ENCODE measurements at regions of chr7 and their contacts with region 1.

Region 1: DNA sequence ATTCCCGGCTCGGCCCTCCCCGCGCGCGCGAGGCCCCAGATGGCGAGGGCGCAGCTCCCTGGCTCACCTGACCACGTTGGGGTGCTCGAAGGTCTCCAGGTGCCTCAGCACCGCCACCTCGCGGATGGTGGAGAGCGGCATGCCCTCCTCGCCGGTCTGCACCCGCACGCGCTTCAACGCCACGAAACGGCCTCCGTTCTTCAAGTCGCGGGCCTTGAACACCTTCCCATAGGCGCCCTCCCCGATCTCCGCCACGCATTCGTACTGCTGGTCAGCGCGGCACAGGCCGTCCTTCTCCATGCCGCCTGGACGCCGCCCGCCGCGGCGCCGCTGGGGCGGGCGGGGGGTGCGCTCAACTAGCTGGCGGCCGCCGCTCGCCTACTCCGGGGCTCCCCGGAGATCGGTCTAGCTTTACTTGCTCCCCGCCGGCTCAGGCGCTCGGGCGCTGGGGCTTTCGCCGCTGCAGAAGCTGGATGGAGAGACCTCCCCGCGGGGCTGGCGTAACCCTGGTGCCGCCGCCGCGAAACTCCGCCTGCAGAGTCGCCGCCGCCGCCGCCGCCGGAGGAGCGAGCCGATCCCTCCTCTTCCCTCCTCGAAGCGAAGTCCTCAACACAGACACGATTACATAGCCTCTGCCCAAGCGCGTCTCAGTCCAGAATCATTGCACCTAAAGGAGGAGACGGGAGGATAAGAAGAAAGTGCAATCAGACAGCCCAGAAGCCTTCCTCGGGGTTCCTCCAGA is 3.2 kb downstream of the CDK6 start:
- DNase-seq: peak; percentile 97
- H3K4me3 Mint-ChIP-seq: peak overlapping the region; percentile 99
- H3K27ac Mint-ChIP-seq: peak overlapping the region; percentile 100
- H3K4me1 Mint-ChIP-seq: peaks cover 40% of the 10 kb centered on the region
- H3K27me3 Mint-ChIP-seq: peaks cover 6% of the 10 kb centered on the region

Region 2: GRCh38 chr7:92134271-92135051 is 698.7 kb before region 1 on chr7 and contains the start of gene CYP51A1:
- intact Hi-C with region 1: loop called (anchors 5 kb)
- DNase-seq: peak; percentile 99
- H3K4me3 Mint-ChIP-seq: peak within 1 kb of the TSS; percentile 95
- H3K27ac Mint-ChIP-seq: peak within 1 kb of the TSS; percentile 100
- H3K4me1 Mint-ChIP-seq: peaks cover 40% of the 10 kb centered on the region
- H3K27me3 Mint-ChIP-seq: no peaks in the 10 kb centered on the region
- total RNA-seq, gene CYP51A1: 103 and 106 TPM in 2 replicates

Region 3: DNA sequence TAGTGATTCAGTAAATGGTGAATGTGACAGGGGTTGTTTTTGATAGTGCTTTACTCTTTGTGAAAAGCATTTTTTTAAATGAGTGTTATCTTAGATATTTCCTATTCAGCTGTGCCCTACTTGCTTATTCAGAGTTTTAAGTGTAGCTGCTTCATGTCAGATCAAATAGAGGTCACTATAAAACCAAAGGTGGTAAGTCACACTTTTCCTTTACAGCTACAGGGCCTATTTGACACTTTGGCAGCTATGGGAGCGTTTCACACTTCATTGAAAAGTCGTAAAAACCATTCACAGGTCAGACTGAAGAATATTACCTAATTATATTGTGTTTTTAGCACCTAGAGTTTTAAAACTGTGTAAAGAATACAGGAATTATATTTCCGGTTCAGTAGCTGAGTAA is 520.1 kb before region 1 on chr7:
- intact Hi-C with region 1: no loop called
- DNase-seq: no peak
- H3K4me3 Mint-ChIP-seq: no peak overlapping the region
- H3K27ac Mint-ChIP-seq: no peak overlapping the region
- H3K4me1 Mint-ChIP-seq: no peaks in the 10 kb centered on the region
- H3K27me3 Mint-ChIP-seq: no peaks in the 10 kb centered on the region

Region 4: GRCh38 chr7:92621026-92621540 is 212.1 kb before region 1 on chr7:
- intact Hi-C with region 1: loop called (anchors 1 kb)
- DNase-seq: peak; percentile 93
- H3K4me3 Mint-ChIP-seq: peak overlapping the region; percentile 71
- H3K27ac Mint-ChIP-seq: peak overlapping the region; percentile 95
- H3K4me1 Mint-ChIP-seq: peaks cover 46% of the 10 kb centered on the region
- H3K27me3 Mint-ChIP-seq: no peaks in the 10 kb centered on the region

Region 5: DNA sequence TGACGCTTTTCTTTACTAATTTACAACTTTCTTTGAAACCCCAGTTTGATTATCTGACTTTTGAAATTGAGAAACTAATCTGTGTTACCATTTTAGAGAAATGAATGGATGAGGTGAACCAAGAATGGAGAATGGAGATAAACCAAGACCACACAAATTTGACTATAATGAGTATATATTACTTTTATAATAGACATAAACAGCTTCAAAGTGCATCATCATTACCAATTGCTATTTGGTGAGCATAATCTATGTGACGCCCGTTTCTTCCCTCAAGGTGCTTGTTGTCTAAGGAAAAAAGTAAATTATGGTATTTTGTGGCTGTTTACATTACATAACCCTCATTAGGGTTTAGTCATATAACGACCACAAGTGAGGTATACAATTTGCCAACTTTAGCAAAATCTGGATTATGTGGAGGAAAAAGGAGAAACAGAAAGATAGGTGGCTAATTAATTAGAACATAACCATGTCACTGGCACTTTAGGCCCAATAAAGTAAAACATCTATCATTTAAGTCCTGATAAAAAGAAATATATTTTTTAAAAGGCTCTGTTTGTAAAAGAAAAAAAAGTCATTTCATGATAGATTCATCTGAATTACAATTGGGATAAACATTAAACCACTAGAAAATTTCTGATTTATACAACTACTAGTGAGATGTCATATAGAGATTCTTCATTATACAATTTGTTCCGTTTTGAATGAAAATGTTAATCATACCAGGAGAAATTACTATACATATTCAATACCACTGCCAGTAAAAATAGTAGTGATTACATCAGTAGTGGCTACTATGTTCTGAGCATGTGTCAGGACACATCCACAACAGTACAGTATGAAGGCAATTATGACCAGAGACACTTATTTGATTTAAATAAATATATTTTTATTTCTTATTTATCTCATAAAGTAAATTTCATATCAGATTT is 124.8 kb before region 1 on chr7:
- intact Hi-C with region 1: loop called (anchors 2 kb)
- DNase-seq: no peak
- H3K4me3 Mint-ChIP-seq: no peak overlapping the region
- H3K27ac Mint-ChIP-seq: peak overlapping the region; percentile 79
- H3K4me1 Mint-ChIP-seq: peaks cover 34% of the 10 kb centered on the region
- H3K27me3 Mint-ChIP-seq: no peaks in the 10 kb centered on the region

Region 6: GRCh38 chr7:92809397-92810241 is 23.6 kb before region 1 on chr7:
- intact Hi-C with region 1: loop called (anchors 1 kb)
- DNase-seq: peak; percentile 91
- H3K4me3 Mint-ChIP-seq: peak overlapping the region; percentile 73
- H3K27ac Mint-ChIP-seq: peak overlapping the region; percentile 90
- H3K4me1 Mint-ChIP-seq: peaks cover 75% of the 10 kb centered on the region
- H3K27me3 Mint-ChIP-seq: no peaks in the 10 kb centered on the region

Region 7: GRCh38 chr7:92904292-92905131 is 71.3 kb after region 1 on chr7:
- intact Hi-C with region 1: loop called (anchors 1 kb)
- DNase-seq: peak; percentile 93
- H3K4me3 Mint-ChIP-seq: peak overlapping the region; percentile 53
- H3K27ac Mint-ChIP-seq: peak overlapping the region; percentile 94
- H3K4me1 Mint-ChIP-seq: peaks cover 21% of the 10 kb centered on the region
- H3K27me3 Mint-ChIP-seq: no peaks in the 10 kb centered on the region

Region 8: DNA sequence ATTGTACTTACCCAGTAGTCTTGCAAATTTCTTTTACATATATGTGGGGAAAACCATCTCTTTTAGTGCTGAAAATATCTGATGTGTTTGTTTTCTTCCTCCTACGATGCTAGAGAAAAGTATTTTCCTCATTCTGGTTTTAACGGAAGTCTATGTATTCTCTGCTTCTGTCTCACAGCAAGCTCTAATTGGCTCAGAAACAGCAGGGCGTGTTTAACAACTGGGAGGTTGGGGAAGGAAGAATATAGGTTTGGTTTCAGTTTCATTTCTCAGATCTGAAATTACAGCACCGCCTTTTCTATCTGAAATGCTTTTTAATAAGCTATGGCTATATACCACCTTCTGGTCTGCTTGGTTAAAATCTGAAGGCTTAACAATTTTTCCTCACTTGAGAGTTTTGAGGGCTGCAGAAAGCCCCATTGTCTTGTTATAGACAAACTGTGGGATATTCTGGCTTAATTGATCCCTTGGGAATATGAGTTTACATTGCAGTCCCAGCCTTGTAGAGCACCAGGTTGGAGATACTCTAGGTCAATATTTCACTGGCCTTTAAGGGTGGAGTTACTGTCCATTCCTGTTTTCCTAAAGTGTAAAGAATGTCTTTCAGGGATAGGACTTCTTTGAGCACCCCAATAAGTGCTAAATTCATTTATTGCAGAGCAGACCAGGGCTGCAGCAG is 284.8 kb after region 1 on chr7 and contains the start of gene SAMD9:
- intact Hi-C with region 1: loop called (anchors 1 kb)
- DNase-seq: peak; percentile 90
- H3K4me3 Mint-ChIP-seq: peak within 1 kb of the TSS; percentile 90
- H3K27ac Mint-ChIP-seq: peak within 1 kb of the TSS; percentile 90
- H3K4me1 Mint-ChIP-seq: peaks cover 54% of the 10 kb centered on the region
- H3K27me3 Mint-ChIP-seq: no peaks in the 10 kb centered on the region
- total RNA-seq, gene SAMD9: 8.6 and 9.4 TPM in 2 replicates

Measured in activated CD4-positive, alpha-beta T cell treated with anti-CD3 and anti-CD28 coated beads, Interleukin-2, amount 10 ng/mL, durations not matched to agents 24 days and 14 days (primary cell).